Activated naive CD4-positive, alpha-beta T cell treated with anti-CD3 and anti-CD28 coated beads for 36 hours (primary cell): ENCODE measurements at regions of chr1 and their contacts with region 1.

Region 1: DNA sequence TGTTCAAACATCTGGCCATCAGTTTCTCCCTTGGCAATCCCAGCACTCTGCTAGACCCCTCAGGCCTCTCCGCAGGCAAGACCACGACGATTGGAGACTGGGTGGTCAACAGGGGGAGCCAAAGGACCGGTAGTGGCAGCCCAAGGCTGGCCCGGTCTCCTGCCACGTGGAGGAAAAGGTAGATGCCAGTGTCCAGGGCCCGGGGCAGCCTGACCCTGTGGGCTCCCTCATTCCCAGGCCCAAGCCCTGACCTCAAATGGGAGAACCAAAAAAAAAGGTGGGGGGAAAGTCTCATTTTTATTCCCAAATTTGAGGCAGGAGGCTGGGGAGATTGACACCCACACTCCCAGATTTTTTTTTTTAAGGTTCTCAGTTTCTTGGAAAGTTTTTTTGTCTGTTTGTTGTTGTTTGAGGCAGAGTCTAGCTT is 24.8 kb downstream of the S100A6 start:
- DNase-seq: peak; percentile 90
- H3K4me3 Mint-ChIP-seq: no peak overlapping the region
- H3K27ac Mint-ChIP-seq: peak overlapping the region; percentile 36
- H3K4me1 Mint-ChIP-seq: peaks cover 8% of the 10 kb centered on the region
- H3K27me3 Mint-ChIP-seq: no peaks in the 10 kb centered on the region

Region 2: DNA sequence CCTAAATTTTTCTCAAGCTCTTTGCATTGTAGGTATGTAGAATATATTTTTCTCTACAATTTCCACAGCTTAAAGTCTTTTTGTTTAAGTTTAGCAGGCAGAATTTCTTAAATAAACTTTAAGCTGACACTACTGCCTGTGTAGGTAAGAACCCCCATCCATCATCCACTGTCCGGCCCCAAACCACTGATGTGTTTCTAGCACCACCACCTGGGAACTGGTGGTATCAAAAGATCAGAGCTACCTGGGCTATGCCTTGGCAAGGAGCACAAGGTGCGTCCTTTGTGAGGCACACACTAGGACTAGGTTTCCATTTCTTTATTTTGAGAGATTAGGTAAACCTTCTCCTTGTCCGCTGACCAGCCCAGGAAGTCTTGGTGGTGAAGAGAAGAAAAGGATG is 318.3 kb before region 1 on chr1:
- CTCF ChIA-PET with region 1: no interaction called
- intact Hi-C with region 1: no loop called
- DNase-seq: peak; percentile 17
- H3K4me3 Mint-ChIP-seq: no peak overlapping the region
- H3K27ac Mint-ChIP-seq: no peak overlapping the region
- H3K4me1 Mint-ChIP-seq: no peaks in the 10 kb centered on the region
- H3K27me3 Mint-ChIP-seq: peaks cover 28% of the 10 kb centered on the region

Region 3: DNA sequence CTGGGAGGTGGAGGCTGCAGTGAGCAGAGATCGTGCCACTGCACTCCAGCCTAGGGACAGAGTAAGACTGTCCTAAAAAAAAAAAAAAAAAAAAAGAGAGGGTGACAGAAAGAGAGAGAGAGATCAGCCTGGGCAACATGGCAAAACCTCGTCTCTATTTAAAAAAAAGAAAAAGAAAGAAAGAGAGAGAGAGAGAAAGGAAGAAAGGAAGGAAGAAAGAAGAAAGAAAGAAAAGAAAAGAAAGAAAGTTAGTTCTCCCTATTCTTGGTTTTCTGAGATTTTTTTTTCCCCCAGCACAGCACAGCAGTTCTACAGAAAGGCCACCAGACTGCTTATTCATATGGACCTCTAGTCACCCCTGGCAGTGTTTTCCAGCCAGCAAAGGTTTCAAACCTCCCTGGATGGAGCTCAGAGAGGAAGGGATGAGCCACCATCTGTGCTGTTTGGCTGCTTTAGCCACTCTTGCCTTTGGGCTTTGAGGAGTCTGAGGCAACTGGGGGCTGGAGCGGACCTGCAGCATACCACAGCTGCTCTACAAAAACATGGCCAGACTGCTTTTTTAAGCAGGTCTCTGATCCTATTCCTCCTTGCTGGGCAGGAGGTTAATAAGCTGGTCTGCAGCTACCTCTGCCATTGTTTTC is 14.2 kb after region 1 on chr1:
- CTCF ChIA-PET with region 1: interaction called, 15 read pairs
- intact Hi-C with region 1: no loop called
- DNase-seq: no peak
- H3K4me3 Mint-ChIP-seq: no peak overlapping the region
- H3K27ac Mint-ChIP-seq: no peak overlapping the region
- H3K4me1 Mint-ChIP-seq: peaks cover 2% of the 10 kb centered on the region
- H3K27me3 Mint-ChIP-seq: no peaks in the 10 kb centered on the region

Region 4: GRCh38 chr1:153550827-153551500 is 40.0 kb after region 1 on chr1:
- CTCF ChIA-PET with region 1: interaction called, 11 read pairs
- intact Hi-C with region 1: no loop called
- DNase-seq: no peak
- H3K4me3 Mint-ChIP-seq: no peak overlapping the region
- H3K27ac Mint-ChIP-seq: no peak overlapping the region
- H3K4me1 Mint-ChIP-seq: peaks cover 18% of the 10 kb centered on the region
- H3K27me3 Mint-ChIP-seq: no peaks in the 10 kb centered on the region

Region 5: GRCh38 chr1:153617675-153618074 is 106.7 kb after region 1 on chr1:
- CTCF ChIA-PET with region 1: interaction called, 43 read pairs
- intact Hi-C with region 1: loop called (anchors 1 kb)
- DNase-seq: peak; percentile 72
- H3K4me3 Mint-ChIP-seq: no peak overlapping the region
- H3K27ac Mint-ChIP-seq: no peak overlapping the region
- H3K4me1 Mint-ChIP-seq: peaks cover 1% of the 10 kb centered on the region
- H3K27me3 Mint-ChIP-seq: no peaks in the 10 kb centered on the region

Region 6: GRCh38 chr1:153749408-153750005 is 238.5 kb after region 1 on chr1:
- CTCF ChIA-PET with region 1: interaction called, 5 read pairs
- intact Hi-C with region 1: loop called (anchors 1 kb)
- DNase-seq: peak; percentile 90
- H3K4me3 Mint-ChIP-seq: no peak overlapping the region
- H3K27ac Mint-ChIP-seq: no peak overlapping the region
- H3K4me1 Mint-ChIP-seq: peaks cover 2% of the 10 kb centered on the region
- H3K27me3 Mint-ChIP-seq: no peaks in the 10 kb centered on the region